ENCODE measurements at regions of chr15 and their contacts with region 1.

Region 1: DNA sequence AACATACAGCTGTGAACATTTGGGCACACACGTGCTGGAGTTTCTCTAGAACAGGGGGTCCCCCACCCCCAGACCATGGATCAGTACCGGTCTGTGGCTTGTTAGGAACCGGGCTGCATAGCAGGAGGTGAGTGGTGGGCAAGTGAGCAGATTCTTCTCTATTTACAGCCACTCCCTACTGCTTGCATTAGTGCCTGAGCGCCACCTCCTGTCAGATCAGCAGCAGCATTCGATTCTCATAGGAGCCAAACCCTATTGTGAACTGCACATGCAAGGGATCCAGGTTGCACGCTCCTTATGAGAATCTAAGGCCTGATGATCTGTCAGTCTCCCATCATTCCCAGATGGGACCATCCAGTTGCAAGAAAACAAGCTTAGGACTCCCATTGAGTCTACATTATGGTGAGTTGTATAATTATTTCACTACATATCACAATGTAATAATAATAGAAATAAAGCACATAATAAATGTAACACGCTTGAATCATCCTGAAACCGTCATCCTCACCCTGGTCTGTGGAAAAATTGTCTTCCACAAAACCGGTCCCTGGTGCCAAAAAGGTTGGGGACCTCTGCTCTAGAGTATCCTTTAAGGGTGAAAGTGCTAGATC is 25.8 kb downstream of the CHRM5 start:
- DNase-seq: peak; percentile 19
- H3K4me3 Mint-ChIP-seq: no peak overlapping the region
- H3K27ac Mint-ChIP-seq: no peak overlapping the region
- H3K4me1 Mint-ChIP-seq: no peaks in the 10 kb centered on the region
- H3K27me3 Mint-ChIP-seq: no peaks in the 10 kb centered on the region

Region 2: GRCh38 chr15:34031987-34032760 is 38.1 kb after region 1 on chr15:
- CTCF ChIA-PET with region 1: no interaction called
- intact Hi-C with region 1: loop called (anchors 5 kb)
- DNase-seq: no peak
- H3K4me3 Mint-ChIP-seq: no peak overlapping the region
- H3K27ac Mint-ChIP-seq: peak overlapping the region; percentile 6
- H3K4me1 Mint-ChIP-seq: peaks cover 19% of the 10 kb centered on the region
- H3K27me3 Mint-ChIP-seq: no peaks in the 10 kb centered on the region